Spleen (tissue), 13 donors: ENCODE measurements at regions of chr1 and their contacts with region 1.

Region 1: GRCh38 chr1:12596007-12596821 is 21.8 kb downstream of the DHRS3 start:
- DNase-seq: peak; percentile 90
- H3K4me3 ChIP-seq: peak overlapping the region in 5 of 8 donors; percentile 25 to 62 (median 31)
- H3K27ac ChIP-seq: peak overlapping the region in 7 of 8 donors; percentile 41 to 70 (median 62)
- H3K4me1 ChIP-seq: peaks cover 27 to 97% (median 54%) of the 10 kb centered on the region in 6 donors
- H3K27me3 ChIP-seq: peaks cover 0 to 20% (median 0%) of the 10 kb centered on the region in 7 donors
- CTCF ChIP-seq: no peak
- POLR2A ChIP-seq: no peak

Region 2: DNA sequence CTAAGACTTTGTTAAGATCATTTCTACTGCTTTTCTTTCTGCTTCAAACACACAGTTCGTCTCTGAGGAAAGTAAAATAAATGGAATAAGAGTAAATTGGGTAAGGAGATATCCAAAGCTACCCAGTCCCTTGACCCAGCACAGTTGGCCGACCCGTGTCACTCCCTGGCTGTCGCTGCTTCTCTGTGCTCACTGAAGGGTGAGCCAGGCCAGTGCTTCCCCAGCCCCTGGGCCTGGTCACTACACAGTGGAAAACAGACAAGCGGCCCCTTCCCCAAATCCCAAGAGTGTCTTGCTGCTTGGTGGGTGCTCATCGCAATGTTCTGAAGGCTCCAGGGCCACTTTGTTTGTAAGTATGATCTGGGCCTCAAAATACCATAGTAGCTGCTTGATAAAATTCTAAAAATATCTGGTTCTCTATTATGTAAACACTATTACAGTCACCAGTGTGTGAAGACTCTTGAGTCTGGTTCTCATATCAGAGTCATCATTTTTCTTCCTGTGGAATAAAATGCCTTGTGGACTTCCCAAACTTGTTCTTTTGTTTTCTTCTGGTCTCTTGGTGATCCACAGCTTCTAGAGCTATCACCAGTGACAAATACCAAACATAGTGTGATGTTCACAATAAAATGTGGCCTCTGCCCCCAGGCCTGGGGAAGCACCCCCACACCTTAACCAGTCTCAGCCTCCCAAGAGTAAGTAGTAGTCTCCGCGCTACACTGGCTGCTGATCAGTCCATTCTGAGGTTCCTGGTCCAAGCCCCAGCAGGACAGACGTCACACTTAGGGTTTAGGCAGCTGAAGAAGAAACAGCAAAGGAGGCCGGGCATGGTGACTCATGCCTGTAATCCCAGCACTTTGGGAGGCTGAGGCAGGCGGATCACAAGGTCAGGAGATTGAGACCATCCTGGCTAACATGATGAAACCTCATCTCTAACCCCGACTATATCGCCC is 84.4 kb before region 1 on chr1:
- intact Hi-C with region 1: no loop called
- DNase-seq: no peak
- H3K4me3 ChIP-seq: peak overlapping the region in 2 of 8 donors; percentile 11 to 49
- H3K27ac ChIP-seq: peak overlapping the region in 6 of 8 donors; percentile 47 to 80 (median 66)
- H3K4me1 ChIP-seq: peaks cover 0 to 24% (median 15%) of the 10 kb centered on the region in 6 donors
- H3K27me3 ChIP-seq: no peaks in the 10 kb centered on the region
- CTCF ChIP-seq: no peak
- POLR2A ChIP-seq: no peak

Region 3: DNA sequence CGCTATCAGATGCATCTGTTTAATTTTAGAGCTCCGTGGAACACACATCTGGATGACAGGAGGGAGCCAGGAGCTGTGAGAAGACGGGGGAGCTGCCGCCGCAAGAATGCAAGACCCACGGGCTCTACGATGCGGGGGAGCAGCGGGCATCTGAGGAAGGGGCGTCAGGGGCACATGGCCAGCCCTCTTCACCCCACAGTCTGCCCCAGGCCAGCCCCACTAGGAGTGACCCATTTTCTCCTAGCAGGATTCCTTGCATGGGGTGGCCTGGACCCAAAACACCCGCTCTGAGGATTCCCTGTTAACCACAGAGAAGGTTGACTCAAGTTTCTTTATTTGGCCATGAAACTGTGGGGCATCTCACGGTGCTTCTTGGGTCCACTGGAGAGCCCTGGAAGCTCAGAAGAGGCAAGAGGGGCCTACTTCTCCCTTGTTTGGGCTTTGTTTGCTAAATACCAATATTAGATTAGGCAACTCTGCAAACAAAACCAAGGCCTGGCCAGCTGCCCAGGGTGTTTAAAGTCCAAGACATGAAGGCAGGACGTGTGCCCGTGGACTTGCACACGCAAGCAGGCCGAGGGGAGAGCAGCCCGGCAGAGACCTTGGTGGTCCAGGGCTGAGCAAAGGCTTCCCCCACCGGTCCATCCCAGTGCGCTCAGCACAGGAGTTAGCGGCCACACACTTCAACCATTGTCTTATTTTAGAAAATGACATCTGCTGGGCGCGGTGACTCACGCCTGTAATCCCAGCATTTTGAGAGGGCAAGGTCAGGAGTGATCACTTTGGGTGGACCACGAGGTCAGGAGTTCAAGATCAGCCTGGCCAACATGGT is 68.0 kb before region 1 on chr1:
- intact Hi-C with region 1: loop called (anchors 10 kb)
- DNase-seq: peak; percentile 71
- H3K4me3 ChIP-seq: no peak overlapping the region
- H3K27ac ChIP-seq: no peak overlapping the region
- H3K4me1 ChIP-seq: peaks cover 0 to 32% (median 11%) of the 10 kb centered on the region in 6 donors
- H3K27me3 ChIP-seq: no peaks in the 10 kb centered on the region
- CTCF ChIP-seq: no peak
- POLR2A ChIP-seq: no peak

Region 4: GRCh38 chr1:13651279-13651678 is 1055.1 kb after region 1 on chr1:
- intact Hi-C with region 1: no loop called
- DNase-seq: no peak
- H3K4me3 ChIP-seq: no peak overlapping the region
- H3K27ac ChIP-seq: no peak overlapping the region
- H3K4me1 ChIP-seq: no peaks in the 10 kb centered on the region
- H3K27me3 ChIP-seq: peaks cover 0 to 33% (median 0%) of the 10 kb centered on the region in 7 donors
- CTCF ChIP-seq: no peak
- POLR2A ChIP-seq: no peak